T-cell (primary cell): ENCODE measurements at regions of chr5 and their contacts with region 1.

Region 1: DNA sequence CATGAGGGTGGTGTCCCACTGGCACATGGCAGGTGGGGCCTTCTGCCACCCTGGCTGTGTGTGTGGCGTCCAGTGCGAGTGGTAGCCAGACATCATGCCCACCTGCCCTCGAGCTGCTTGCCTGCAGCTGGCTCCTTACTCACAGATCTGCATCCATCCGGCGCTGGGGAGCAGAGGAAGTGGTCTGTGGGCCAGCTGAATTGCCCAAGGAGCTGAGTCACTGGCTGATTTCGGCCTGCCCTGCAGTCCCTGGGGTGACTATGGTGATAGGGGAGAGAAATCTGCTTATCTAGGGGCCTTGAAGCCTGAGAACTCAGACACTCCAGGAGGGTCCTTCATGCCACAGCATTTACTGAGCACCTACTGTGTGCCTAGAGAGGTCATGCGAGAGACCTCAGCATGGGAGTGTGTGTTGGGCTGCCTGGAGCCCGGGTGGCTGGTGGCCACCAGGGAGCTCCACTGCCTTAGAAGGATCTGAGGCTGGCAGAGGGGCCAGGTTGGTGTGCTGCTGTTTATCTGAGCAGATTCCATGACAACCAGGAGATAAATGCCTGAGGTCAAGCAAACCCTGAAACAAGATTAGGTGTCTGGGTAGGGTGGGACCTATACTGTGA is 57.1 kb downstream of the SLC22A5 start:
- DNase-seq: peak; percentile 15 to 72 (median 44)
- ATAC-seq: peak; percentile 24 to 49 (median 38)
- H3K4me3 ChIP-seq: peak overlapping the region; percentile 2 to 17
- H3K4me3 Mint-ChIP-seq: peak overlapping the region; percentile 64 to 77 (median 68)
- H3K27ac ChIP-seq: peak overlapping the region; percentile 94
- H3K27ac Mint-ChIP-seq: peak overlapping the region; percentile 98 to 100
- H3K4me1 ChIP-seq: peaks cover 61 to 97% of the 10 kb centered on the region in 2 experiments
- H3K4me1 Mint-ChIP-seq: peaks cover 94 to 99% (median 98%) of the 10 kb centered on the region in 3 donors
- H3K27me3 ChIP-seq: no peaks in the 10 kb centered on the region
- H3K27me3 Mint-ChIP-seq: no peaks in the 10 kb centered on the region

Region 2: DNA sequence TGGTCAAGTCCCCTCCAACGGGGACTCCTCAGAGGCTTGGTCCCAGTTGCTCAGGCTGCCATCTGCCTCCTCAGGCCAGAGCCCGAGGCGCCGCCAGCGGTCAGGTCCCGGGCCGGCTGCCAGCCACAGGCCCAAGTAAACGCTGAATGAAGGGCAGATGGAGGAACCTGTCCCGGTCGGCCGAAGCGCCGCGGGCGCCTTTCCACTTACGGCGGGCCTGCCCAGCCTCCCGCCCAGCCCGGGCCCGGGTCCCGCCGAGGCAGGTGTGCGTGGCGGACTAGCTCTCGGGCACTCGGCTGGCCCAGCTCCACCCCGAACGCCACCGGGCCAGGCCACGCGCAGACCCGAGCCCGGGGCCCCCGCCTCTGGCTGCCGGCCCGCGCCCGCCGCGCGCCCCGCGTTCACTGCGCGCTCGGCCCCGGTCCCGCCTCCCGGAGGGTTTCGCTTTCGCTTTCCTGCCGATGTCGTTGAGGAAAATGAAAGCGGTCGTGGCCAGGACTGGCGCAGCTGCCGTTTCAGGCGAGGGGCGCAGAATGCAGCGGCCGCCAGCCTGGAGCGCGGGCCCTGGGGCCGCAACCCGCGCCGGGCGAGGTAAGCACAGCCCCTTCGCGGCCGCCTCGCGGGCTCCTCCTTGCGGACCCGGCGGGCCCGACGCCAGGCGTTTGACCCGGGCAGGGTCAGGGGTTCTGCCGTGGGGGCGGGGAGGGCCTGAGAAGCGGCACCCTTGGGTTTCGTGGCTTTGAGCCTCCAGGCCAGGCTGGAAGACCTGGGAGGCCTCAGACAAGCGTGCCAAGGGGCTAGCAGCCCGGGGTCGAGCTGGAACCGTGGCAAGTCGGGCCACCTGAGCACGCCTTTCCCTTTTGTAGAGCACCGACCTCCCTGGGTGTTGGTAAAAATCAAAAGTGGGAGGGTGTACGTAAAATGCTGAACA is 15.9 kb before region 1 on chr5:
- CTCF ChIA-PET with region 1: interaction called in 1 of 2 experiments, 10 read pairs
- POLR2A ChIA-PET with region 1: interaction called, 3 to 5 read pairs
- DNase-seq: peak; percentile 67 to 93 (median 79)
- ATAC-seq: peak; percentile 70 to 77 (median 74)
- H3K4me3 ChIP-seq: peak overlapping the region; percentile 87 to 94
- H3K4me3 Mint-ChIP-seq: peak overlapping the region; percentile 98 to 99 (median 98)
- H3K27ac ChIP-seq: peak overlapping the region; percentile 98
- H3K27ac Mint-ChIP-seq: peak overlapping the region; percentile 99
- H3K4me1 ChIP-seq: peaks cover 19 to 52% of the 10 kb centered on the region in 2 experiments
- H3K4me1 Mint-ChIP-seq: peaks cover 73 to 85% (median 84%) of the 10 kb centered on the region in 3 donors
- H3K27me3 ChIP-seq: no peaks in the 10 kb centered on the region
- H3K27me3 Mint-ChIP-seq: no peaks in the 10 kb centered on the region

Region 3: DNA sequence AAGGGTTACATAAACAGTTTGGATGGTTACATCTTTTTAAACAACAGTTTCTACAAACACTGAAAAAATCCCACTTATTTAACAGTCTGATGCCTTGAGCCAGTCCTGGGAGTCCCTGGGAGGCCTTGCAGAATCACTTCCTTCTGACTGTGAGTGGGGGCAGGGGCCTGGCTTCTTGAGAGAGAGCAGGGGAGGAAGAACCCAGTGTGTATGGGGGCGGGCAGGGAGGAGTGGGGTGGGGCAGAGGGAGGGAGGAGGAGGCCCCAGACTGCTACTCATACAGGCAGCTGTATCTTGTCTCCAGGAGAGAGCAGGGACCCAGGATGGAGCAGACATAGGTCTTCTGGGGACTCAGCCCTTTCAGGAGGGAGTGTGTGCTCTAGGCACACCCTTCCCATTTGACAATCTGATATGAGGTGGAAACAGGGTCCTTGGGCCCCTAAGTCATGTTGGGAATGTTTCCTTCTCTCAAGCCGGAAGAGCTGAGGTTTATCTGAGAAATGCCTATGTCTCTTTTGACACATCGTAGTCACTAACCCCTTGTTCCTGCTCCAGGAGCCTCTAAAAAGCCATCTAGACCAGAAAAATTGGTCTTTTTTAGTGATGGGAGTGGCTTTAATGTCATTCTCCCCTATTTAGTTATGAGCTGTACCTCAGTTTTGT is 11.1 kb after region 1 on chr5:
- CTCF ChIA-PET with region 1: interaction called in 1 of 2 experiments, 17 read pairs
- POLR2A ChIA-PET with region 1: interaction called in 1 of 2 experiments, 3 read pairs
- DNase-seq: peak; percentile 40 to 76 (median 61)
- ATAC-seq: peak; percentile 93 to 98 (median 95)
- H3K4me3 ChIP-seq: no peak overlapping the region
- H3K4me3 Mint-ChIP-seq: peak overlapping the region; percentile 37 to 68 (median 47)
- H3K27ac ChIP-seq: peak overlapping the region; percentile 58
- H3K27ac Mint-ChIP-seq: peak overlapping the region; percentile 92 to 93
- H3K4me1 ChIP-seq: peaks cover 36 to 81% of the 10 kb centered on the region in 2 experiments
- H3K4me1 Mint-ChIP-seq: peaks cover 89 to 92% (median 91%) of the 10 kb centered on the region in 3 donors
- H3K27me3 ChIP-seq: no peaks in the 10 kb centered on the region
- H3K27me3 Mint-ChIP-seq: no peaks in the 10 kb centered on the region

Region 4: GRCh38 chr5:132473019-132473531 is 46.4 kb after region 1 on chr5:
- CTCF ChIA-PET with region 1: interaction called in 1 of 2 experiments, 4 read pairs
- POLR2A ChIA-PET with region 1: interaction called, 12 to 15 read pairs
- DNase-seq: peak; percentile 55 to 94 (median 89)
- ATAC-seq: peak; percentile 68 to 91 (median 86)
- H3K4me3 ChIP-seq: no peak overlapping the region
- H3K4me3 Mint-ChIP-seq: peak overlapping the region; percentile 41 to 46 (median 43)
- H3K27ac ChIP-seq: peak overlapping the region; percentile 85
- H3K27ac Mint-ChIP-seq: peak overlapping the region; percentile 93 to 97
- H3K4me1 ChIP-seq: peaks cover 28 to 98% of the 10 kb centered on the region in 2 experiments
- H3K4me1 Mint-ChIP-seq: peaks cover 85 to 93% (median 90%) of the 10 kb centered on the region in 3 donors
- H3K27me3 ChIP-seq: no peaks in the 10 kb centered on the region
- H3K27me3 Mint-ChIP-seq: no peaks in the 10 kb centered on the region

Region 5: DNA sequence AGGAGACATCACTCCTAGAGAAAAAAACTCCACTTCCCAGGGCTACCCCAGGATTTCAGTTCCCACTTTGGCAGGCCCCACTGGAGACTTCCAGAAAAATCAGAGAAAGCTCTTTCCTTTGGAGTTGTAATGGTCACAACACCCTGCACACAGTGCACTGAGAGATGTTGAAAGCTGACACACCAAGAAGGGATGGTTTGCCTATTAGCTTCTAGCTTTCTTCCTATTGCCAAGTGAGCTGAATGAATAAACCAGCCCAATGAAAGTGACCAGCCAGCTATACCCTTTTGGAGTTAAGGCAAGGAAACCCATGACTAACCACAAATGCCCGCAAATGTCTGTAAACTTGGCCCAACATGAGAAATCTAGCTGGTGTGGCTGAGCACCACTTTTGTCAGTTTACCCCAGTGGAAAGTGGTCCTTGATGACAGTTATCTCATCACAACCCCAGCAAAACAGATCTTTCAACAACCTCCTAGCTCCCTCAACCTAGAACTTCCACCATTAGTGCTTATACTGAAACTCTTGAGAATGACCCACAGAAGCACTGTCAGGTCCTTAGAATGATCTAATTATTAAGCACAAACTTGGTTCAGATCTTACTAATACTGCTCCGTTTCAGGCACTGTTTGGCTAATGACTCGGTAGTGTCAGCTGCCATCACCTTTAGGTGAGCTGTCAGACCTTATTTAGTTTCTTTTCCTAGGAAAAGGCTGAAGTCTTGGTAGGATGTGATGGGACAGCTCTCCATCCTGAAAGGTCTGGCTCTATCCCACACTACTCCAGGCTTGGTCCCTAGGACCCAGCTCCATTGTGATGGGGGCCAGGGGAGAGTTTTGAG is 52.7 kb after region 1 on chr5:
- CTCF ChIA-PET with region 1: interaction called, 3 to 4 read pairs
- POLR2A ChIA-PET with region 1: interaction called, 12 to 15 read pairs
- DNase-seq: peak in 2 of 35 experiments; percentile 0 to 43
- ATAC-seq: no peak
- H3K4me3 ChIP-seq: no peak overlapping the region
- H3K4me3 Mint-ChIP-seq: peak overlapping the region in 1 of 3 donors; percentile 13
- H3K27ac ChIP-seq: peak overlapping the region; percentile 43
- H3K27ac Mint-ChIP-seq: peak overlapping the region; percentile 83 to 87
- H3K4me1 ChIP-seq: peaks cover 3 to 94% of the 10 kb centered on the region in 2 experiments
- H3K4me1 Mint-ChIP-seq: peaks cover 81 to 87% (median 83%) of the 10 kb centered on the region in 3 donors
- H3K27me3 ChIP-seq: no peaks in the 10 kb centered on the region
- H3K27me3 Mint-ChIP-seq: no peaks in the 10 kb centered on the region

Region 6: GRCh38 chr5:132655821-132656773 is 229.5 kb after region 1 on chr5:
- CTCF ChIA-PET with region 1: no interaction called
- POLR2A ChIA-PET with region 1: no interaction called
- DNase-seq: peak in 9 of 35 experiments; percentile 11 to 55 (median 16)
- ATAC-seq: peak; percentile 28 to 66 (median 53)
- H3K4me3 ChIP-seq: peak overlapping the region; percentile 23 to 53
- H3K4me3 Mint-ChIP-seq: peak overlapping the region; percentile 28 to 66 (median 39)
- H3K27ac ChIP-seq: no peak overlapping the region
- H3K27ac Mint-ChIP-seq: no peak overlapping the region
- H3K4me1 ChIP-seq: peaks cover 0 to 14% of the 10 kb centered on the region in 2 experiments
- H3K4me1 Mint-ChIP-seq: peaks cover 8 to 23% (median 11%) of the 10 kb centered on the region in 3 donors
- H3K27me3 ChIP-seq: peaks cover 0 to 56% of the 10 kb centered on the region in 2 experiments
- H3K27me3 Mint-ChIP-seq: peaks cover 35 to 36% of the 10 kb centered on the region in 2 donors